HepG2 (cell line): ENCODE measurements at regions of chr7 and their contacts with region 1.

Region 1: GRCh38 chr7:3300651-3301378 is at the start of gene SDK1:
- DNase-seq: peak; percentile 73
- ATAC-seq: peak; percentile 91
- H3K4me3 ChIP-seq: peak within 1 kb of the TSS; percentile 58 to 82 (median 80)
- H3K27ac ChIP-seq: no peak within 1 kb of the TSS
- H3K4me1 ChIP-seq: peaks cover 27% of the 10 kb centered on the region
- H3K27me3 ChIP-seq: peaks cover 0 to 8% of the 10 kb centered on the region in 2 experiments; a peak in 1 of 5 replicates
- CTCF ChIP-seq: peak; percentile 77
- EP300 ChIP-seq: no peak
- POLR2A ChIP-seq: no peak
- RAD21 ChIP-seq: peak; percentile 89
- total RNA-seq, gene SDK1: 0.17 and 0.35 TPM in 2 replicates

Region 2: DNA sequence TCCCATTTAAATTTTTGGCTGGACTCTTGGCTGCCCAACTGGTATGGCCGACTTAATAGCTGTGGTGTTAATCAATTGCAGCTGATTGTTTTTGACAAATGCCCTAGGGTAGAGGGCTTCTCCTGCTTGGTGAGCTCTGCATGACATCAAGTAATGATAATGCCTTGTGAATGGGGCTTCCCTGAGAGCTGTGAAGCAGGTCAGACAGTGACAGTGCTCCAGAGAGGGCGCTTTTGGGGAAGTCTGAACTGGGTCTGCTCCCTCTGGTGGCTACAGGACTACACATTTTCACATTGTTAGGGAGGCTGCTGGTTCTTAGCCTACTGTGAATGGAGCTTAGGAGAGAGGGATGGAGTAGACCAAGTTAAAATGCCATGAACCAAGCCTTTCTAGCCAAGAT is 99.0 kb after region 1 on chr7:
- CTCF ChIA-PET with region 1: interaction called, 17 read pairs
- POLR2A ChIA-PET with region 1: no interaction called
- in situ Hi-C with region 1: no loop called
- intact Hi-C with region 1: loop called (anchors 1 kb)
- DNase-seq: peak; percentile 73
- ATAC-seq: peak; percentile 99
- H3K4me3 ChIP-seq: no peak overlapping the region
- H3K27ac ChIP-seq: no peak overlapping the region
- H3K4me1 ChIP-seq: peaks cover 9% of the 10 kb centered on the region; the same call in 1 of the 2 replicates
- H3K27me3 ChIP-seq: no peaks in the 10 kb centered on the region
- CTCF ChIP-seq: peak; percentile 64
- EP300 ChIP-seq: no peak
- POLR2A ChIP-seq: no peak
- RAD21 ChIP-seq: no peak

Region 3: DNA sequence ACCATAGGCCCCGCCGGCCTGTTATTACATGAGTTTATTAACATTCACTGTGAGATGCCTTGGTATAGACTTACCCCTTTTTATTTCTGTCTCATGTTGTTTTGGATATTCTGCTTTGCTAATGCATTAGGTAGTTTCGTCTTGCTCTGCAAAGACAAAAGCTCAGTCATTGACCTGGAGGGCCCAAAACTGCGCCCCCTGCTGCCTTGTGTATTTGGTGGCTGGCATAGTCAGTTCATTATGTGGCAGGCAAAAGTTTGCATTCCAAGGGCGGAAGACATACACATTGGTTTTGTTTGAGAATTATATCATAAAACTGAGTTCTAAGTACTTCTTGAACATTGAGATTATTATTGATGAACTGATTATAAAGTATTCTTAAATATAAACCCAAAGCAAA is 372.7 kb after region 1 on chr7:
- CTCF ChIA-PET with region 1: no interaction called
- POLR2A ChIA-PET with region 1: no interaction called
- in situ Hi-C with region 1: no loop called
- intact Hi-C with region 1: loop called (anchors 5 kb)
- DNase-seq: peak; percentile 23
- ATAC-seq: no peak
- H3K4me3 ChIP-seq: no peak overlapping the region
- H3K27ac ChIP-seq: no peak overlapping the region
- H3K4me1 ChIP-seq: no peaks in the 10 kb centered on the region
- H3K27me3 ChIP-seq: no peaks in the 10 kb centered on the region
- CTCF ChIP-seq: peak; percentile 53
- EP300 ChIP-seq: no peak
- POLR2A ChIP-seq: no peak
- RAD21 ChIP-seq: no peak